ENCODE measurements at regions of chr9 and their contacts with region 1.

Region 1: DNA sequence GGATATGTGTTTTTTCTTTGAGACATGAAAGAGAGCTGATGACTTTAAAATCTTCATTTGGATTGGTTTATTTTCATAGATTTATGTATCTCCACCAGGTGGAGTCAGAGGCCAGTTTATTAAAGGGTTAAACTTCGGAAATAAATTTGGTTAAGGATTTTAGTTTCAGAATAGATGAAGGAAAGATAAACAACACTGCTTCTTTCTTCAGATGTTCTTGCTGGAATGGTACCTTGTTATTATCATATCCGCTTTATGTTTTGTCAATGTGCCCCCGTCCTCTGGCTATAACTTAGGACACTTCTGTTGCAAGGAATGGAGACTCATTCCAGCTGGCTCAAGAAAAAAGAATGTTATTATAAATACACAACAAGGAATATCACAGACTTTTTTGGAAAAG is 81.2 kb downstream of the ALDH1A1 start:
- DNase-seq: peak in 1 of 4 experiments; percentile 39
- ATAC-seq: 0 out of 3 replicates have a peak, but pooled peaks have one; percentile 40
- H3K4me3 ChIP-seq: no peak overlapping the region
- H3K27ac ChIP-seq: no peak overlapping the region
- H3K4me1 ChIP-seq: no peaks in the 10 kb centered on the region; a peak in 1 of 5 replicates
- H3K27me3 ChIP-seq: no peaks in the 10 kb centered on the region
- CTCF ChIP-seq: peak; percentile 21 to 61 (median 34); a peak in 3 of 6 replicates
- EP300 ChIP-seq: no peak
- POLR2A ChIP-seq: no peak
- RAD21 ChIP-seq: peak; percentile 80 to 88

Region 2: GRCh38 chr9:72960446-72960845 is 88.8 kb after region 1 on chr9:
- CTCF ChIA-PET with region 1: no interaction called
- POLR2A ChIA-PET with region 1: no interaction called
- in situ Hi-C with region 1: no loop called
- intact Hi-C with region 1: loop called (anchors 2 kb)
- DNase-seq: no peak
- ATAC-seq: peak; percentile 76
- H3K4me3 ChIP-seq: no peak overlapping the region
- H3K27ac ChIP-seq: no peak overlapping the region
- H3K4me1 ChIP-seq: no peaks in the 10 kb centered on the region; a peak in 1 of 5 replicates
- H3K27me3 ChIP-seq: no peaks in the 10 kb centered on the region
- CTCF ChIP-seq: peak in 2 of 3 experiments; percentile 8 to 23; a peak in 2 of 6 replicates
- EP300 ChIP-seq: no peak
- POLR2A ChIP-seq: no peak
- RAD21 ChIP-seq: peak in 1 of 2 experiments; percentile 50; a peak in 2 of 4 replicates

Region 3: GRCh38 chr9:73023025-73023541 is 151.4 kb after region 1 on chr9:
- CTCF ChIA-PET with region 1: no interaction called
- POLR2A ChIA-PET with region 1: no interaction called
- in situ Hi-C with region 1: no loop called
- intact Hi-C with region 1: loop called (anchors 2 kb)
- DNase-seq: peak in 2 of 4 experiments; percentile 15 to 72
- ATAC-seq: no peak
- H3K4me3 ChIP-seq: no peak overlapping the region
- H3K27ac ChIP-seq: peak overlapping the region; percentile 74; the same call in 1 of the 3 replicates
- H3K4me1 ChIP-seq: peaks cover 8 to 24% of the 10 kb centered on the region in 2 experiments; a peak in 3 of 5 replicates
- H3K27me3 ChIP-seq: no peaks in the 10 kb centered on the region
- CTCF ChIP-seq: peak; percentile 50 to 58 (median 55)
- EP300 ChIP-seq: no peak
- POLR2A ChIP-seq: no peak
- RAD21 ChIP-seq: peak; percentile 44 to 73

Region 4: DNA sequence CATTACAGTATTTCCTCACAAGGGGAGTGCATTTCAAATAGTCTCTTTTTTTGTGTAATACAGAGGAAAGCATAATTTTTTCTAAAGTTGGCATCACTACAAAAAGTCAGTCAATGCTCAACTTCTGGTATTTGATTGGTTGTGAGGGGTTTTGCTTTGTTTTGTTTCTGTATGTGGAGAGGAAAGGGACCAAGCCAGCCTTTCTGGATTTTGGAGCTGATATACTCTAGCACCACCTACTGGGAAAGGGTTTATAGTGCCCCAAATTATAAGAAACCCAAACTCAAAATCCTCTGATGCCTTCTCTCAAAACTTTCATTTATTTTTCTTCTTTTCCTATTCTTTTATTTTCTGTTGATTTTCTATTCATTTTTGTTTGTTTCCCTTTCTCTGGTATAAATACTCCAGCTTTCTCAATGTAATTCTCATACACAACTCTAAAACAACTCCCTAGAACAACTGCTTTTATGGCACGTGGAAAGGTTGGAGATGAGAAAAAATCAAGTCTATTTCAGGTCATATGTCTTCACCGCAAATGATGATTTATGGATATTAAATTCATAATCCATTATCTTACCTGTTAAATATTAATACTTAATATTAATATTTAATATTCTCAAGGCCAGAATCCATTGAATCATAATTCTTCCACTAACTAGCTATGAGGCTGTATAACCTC is 210.4 kb after region 1 on chr9:
- CTCF ChIA-PET with region 1: interaction called, 11 read pairs
- POLR2A ChIA-PET with region 1: interaction called, 3 read pairs
- in situ Hi-C with region 1: no loop called
- intact Hi-C with region 1: loop called (anchors 1 kb)
- DNase-seq: peak; percentile 13 to 64 (median 33)
- ATAC-seq: peak; percentile 70; the same call in 2 of the 3 replicates
- H3K4me3 ChIP-seq: no peak overlapping the region
- H3K27ac ChIP-seq: no peak overlapping the region
- H3K4me1 ChIP-seq: no peaks in the 10 kb centered on the region; a peak in 1 of 5 replicates
- H3K27me3 ChIP-seq: no peaks in the 10 kb centered on the region
- CTCF ChIP-seq: peak; percentile 54 to 77 (median 66)
- EP300 ChIP-seq: no peak
- POLR2A ChIP-seq: no peak
- RAD21 ChIP-seq: peak; percentile 86 to 87

Region 5: DNA sequence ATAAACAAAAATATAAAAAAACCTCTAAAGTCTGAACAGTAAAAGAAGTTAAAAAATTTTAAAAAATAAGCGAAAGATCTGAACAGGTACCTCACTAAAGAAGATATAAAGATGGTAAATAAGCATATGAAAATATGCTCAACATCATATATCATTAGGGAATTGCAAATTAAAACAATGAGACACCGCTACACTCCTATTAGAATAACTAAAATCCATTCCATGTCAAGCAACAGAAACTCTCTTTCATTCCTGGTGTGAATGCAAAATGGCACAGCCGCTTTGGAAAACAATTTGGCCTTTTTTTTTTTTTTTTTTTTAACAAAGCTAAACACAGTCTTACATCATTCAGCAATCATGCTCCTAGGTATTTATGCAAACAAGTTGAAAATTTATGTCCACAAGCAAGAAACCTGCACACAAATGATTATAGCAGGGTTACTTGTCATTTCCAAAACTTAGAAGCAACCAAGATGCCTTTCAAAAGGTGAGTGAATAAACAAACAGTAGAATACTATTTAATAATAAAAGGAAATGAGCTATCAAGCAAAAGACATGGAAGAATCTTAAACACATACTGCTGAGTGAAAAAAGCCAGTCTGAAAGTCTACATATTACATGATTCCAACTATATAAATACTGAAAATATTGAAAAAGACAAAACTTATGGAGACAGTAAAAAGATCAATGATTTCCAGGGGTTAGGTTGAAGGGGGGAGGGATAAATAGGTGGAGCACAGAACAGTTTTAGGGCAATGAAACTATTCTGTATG is 302.1 kb after region 1 on chr9:
- CTCF ChIA-PET with region 1: no interaction called
- POLR2A ChIA-PET with region 1: interaction called, 3 read pairs
- in situ Hi-C with region 1: loop called (anchors 5 kb)
- intact Hi-C with region 1: no loop called
- DNase-seq: no peak
- ATAC-seq: no peak
- H3K4me3 ChIP-seq: no peak overlapping the region
- H3K27ac ChIP-seq: no peak overlapping the region
- H3K4me1 ChIP-seq: no peaks in the 10 kb centered on the region
- H3K27me3 ChIP-seq: no peaks in the 10 kb centered on the region
- CTCF ChIP-seq: no peak
- EP300 ChIP-seq: no peak
- POLR2A ChIP-seq: no peak
- RAD21 ChIP-seq: no peak

Region 6: GRCh38 chr9:73183917-73184861 is 312.5 kb after region 1 on chr9:
- CTCF ChIA-PET with region 1: interaction called, 13 read pairs
- POLR2A ChIA-PET with region 1: no interaction called
- in situ Hi-C with region 1: no loop called
- intact Hi-C with region 1: loop called (anchors 1 kb)
- DNase-seq: peak in 3 of 4 experiments; percentile 10 to 38 (median 11)
- ATAC-seq: 0 out of 3 replicates have a peak, but pooled peaks have one; percentile 48
- H3K4me3 ChIP-seq: no peak overlapping the region
- H3K27ac ChIP-seq: no peak overlapping the region; the same call in 2 of the 3 replicates
- H3K4me1 ChIP-seq: no peaks in the 10 kb centered on the region
- H3K27me3 ChIP-seq: no peaks in the 10 kb centered on the region
- CTCF ChIP-seq: peak in 2 of 3 experiments; percentile 14 to 57; a peak in 3 of 6 replicates
- EP300 ChIP-seq: no peak
- POLR2A ChIP-seq: no peak
- RAD21 ChIP-seq: peak; percentile 74

Region 7: DNA sequence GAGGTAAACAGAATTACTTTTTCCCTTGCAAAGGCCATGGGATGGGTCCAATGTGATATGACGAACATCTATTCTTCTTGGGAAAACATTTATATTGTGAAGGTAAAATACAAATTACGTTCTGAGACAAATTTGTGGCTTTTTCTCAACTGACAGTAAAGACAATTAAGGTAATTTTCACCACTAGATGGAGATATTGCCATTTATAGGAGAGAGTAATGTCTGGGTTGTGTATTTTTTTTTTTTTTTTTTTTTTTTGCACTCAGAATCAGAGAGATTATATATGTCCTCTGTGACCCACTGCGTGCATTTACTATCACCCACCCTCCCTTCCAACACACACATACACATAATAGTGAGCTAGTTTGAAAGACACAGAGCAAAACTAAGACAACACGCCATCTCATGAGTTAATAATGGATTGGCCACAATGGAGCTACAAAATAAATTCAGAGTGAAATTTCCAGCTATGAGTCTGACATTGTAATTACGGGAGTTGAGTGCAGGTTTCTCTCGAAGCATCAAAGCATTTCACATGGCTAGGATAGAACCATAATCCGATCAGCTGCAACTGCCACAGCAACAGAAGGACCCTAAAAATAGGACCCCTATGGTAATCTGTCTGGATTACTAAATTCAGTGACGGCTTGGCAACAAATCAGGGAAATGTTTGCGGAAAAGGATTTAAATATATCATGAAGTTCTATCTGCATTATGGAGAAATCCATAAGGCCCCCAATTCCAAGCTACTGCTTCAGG is 329.2 kb after region 1 on chr9:
- CTCF ChIA-PET with region 1: interaction called, 8 read pairs
- POLR2A ChIA-PET with region 1: no interaction called
- in situ Hi-C with region 1: no loop called
- intact Hi-C with region 1: loop called (anchors 5 kb)
- DNase-seq: peak in 3 of 4 experiments; percentile 8 to 43 (median 13)
- ATAC-seq: peak; percentile 86
- H3K4me3 ChIP-seq: no peak overlapping the region
- H3K27ac ChIP-seq: no peak overlapping the region
- H3K4me1 ChIP-seq: no peaks in the 10 kb centered on the region
- H3K27me3 ChIP-seq: no peaks in the 10 kb centered on the region
- CTCF ChIP-seq: peak; percentile 36 to 68 (median 40); a peak in 5 of 6 replicates
- EP300 ChIP-seq: no peak
- POLR2A ChIP-seq: no peak
- RAD21 ChIP-seq: peak; percentile 60 to 65